K562 (cell line): ENCODE measurements at regions of chr15 and their contacts with region 1.

Region 1: GRCh38 chr15:64731012-64731806 is 44.2 kb downstream of the RBPMS2 start:
- DNase-seq: peak; percentile 70 to 86 (median 76)
- ATAC-seq: peak; percentile 91
- H3K4me3 ChIP-seq: no peak overlapping the region
- H3K27ac ChIP-seq: no peak overlapping the region
- H3K4me1 ChIP-seq: no peaks in the 10 kb centered on the region; a peak in 2 of 5 replicates
- H3K27me3 ChIP-seq: peaks cover 8 to 22% of the 10 kb centered on the region in 2 experiments; a peak in 2 of 5 replicates
- CTCF ChIP-seq: peak; percentile 93 to 96 (median 94)
- EP300 ChIP-seq: no peak
- POLR2A ChIP-seq: no peak
- RAD21 ChIP-seq: peak; percentile 92 to 97

Region 2: GRCh38 chr15:64162870-64163658 is 568.1 kb before region 1 on chr15 and contains the start of gene PPIB:
- CTCF ChIA-PET with region 1: no interaction called
- POLR2A ChIA-PET with region 1: no interaction called
- in situ Hi-C with region 1: no loop called
- intact Hi-C with region 1: loop called (anchors 1 kb)
- DNase-seq: peak; percentile 95 to 98 (median 96)
- ATAC-seq: peak; percentile 98
- H3K4me3 ChIP-seq: peak within 1 kb of the TSS; percentile 92
- H3K27ac ChIP-seq: peak within 1 kb of the TSS; percentile 93
- H3K4me1 ChIP-seq: peaks cover 16 to 27% of the 10 kb centered on the region in 2 experiments; a peak in 3 of 5 replicates
- H3K27me3 ChIP-seq: no peaks in the 10 kb centered on the region
- CTCF ChIP-seq: peak; percentile 82 to 88 (median 86)
- EP300 ChIP-seq: no peak
- POLR2A ChIP-seq: peak; percentile 98
- RAD21 ChIP-seq: peak; percentile 61 to 80
- polyA plus RNA-seq, gene PPIB: 652 to 746 TPM

Region 3: DNA sequence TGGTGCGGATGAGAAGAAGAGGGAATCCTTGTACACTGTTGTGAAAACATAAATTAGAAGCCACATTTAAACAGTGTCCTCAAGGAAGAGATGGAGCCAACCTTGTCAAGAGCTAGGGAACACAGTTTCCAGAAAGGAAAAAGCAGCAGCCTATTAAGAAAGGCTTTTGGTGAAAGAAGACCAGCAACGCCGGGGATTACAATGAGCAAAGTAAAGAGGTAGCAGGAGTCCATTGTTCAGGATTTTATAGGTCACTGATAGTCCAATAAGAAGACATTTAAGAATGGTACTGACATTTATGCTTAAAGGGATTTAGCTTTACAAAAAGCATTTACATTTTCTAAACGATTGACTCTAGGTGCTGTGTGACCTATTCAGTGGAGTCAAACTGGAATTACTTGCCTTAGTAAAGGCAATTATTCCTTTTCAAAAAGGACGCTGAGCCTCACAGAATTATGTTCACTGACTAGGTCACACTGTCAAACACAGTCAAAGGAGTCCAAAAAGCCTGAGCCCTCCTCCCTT is 416.0 kb before region 1 on chr15:
- CTCF ChIA-PET with region 1: no interaction called
- POLR2A ChIA-PET with region 1: no interaction called
- in situ Hi-C with region 1: no loop called
- intact Hi-C with region 1: no loop called
- DNase-seq: no peak
- ATAC-seq: no peak
- H3K4me3 ChIP-seq: no peak overlapping the region
- H3K27ac ChIP-seq: no peak overlapping the region
- H3K4me1 ChIP-seq: no peaks in the 10 kb centered on the region
- H3K27me3 ChIP-seq: no peaks in the 10 kb centered on the region
- CTCF ChIP-seq: no peak
- EP300 ChIP-seq: no peak
- POLR2A ChIP-seq: no peak
- RAD21 ChIP-seq: no peak

Region 4: DNA sequence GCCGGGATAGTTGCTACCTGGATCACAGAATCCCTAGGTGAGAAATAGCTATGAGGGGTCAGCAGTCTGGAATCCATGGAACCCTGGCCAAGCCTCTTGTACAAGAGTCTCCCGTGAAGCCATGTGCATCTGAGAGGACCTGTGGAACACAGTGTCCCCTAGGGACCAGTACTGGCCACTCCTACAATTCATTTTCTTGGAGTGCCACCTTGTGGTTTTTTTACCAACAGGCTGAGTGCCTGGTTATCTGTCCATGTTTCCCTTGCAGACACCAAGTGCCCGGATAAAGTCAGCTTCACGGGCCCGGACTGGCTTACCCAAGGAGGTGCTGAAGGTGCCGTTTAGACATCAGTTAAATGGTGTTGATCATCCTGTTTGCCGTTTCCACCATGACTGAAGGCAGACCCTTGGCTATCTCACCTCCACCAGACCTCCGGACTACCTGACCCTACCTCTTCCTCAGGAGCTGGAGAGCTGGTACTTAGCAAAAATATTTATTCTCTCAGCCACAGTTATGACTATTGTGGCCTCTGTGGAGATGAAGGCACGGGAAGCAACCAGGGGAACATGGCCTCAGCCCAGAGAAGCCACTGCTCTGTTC is 49.7 kb before region 1 on chr15:
- CTCF ChIA-PET with region 1: interaction called, 92 read pairs
- POLR2A ChIA-PET with region 1: interaction called, 13 read pairs
- in situ Hi-C with region 1: loop called (anchors 5 kb)
- intact Hi-C with region 1: loop called (anchors 1 kb)
- DNase-seq: peak; percentile 60 to 80 (median 70)
- ATAC-seq: peak; percentile 98
- H3K4me3 ChIP-seq: no peak overlapping the region
- H3K27ac ChIP-seq: no peak overlapping the region
- H3K4me1 ChIP-seq: no peaks in the 10 kb centered on the region; a peak in 1 of 5 replicates
- H3K27me3 ChIP-seq: no peaks in the 10 kb centered on the region
- CTCF ChIP-seq: peak; percentile 91 to 100 (median 99)
- EP300 ChIP-seq: 0 out of 2 replicates have a peak, but pooled peaks have one; percentile 5
- POLR2A ChIP-seq: no peak
- RAD21 ChIP-seq: peak; percentile 93 to 98

Region 5: DNA sequence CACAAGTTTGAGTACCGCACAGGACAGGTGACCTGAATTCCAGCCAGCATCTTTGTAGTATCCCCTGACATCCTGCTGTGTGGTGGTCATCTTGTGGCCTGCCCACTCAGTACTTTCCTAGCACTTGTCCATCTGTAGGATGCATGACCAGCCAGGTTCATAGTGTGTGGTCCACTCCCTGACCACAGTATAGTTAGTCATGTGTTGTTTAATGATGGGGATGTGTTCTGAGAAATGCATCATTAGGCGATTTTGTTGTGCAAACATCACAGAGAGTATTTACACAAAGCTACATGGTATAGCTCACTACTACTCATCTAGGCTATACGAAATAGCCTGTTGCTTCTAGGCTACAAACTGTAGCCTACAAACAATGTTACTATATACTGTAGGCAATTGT is 61.1 kb after region 1 on chr15:
- CTCF ChIA-PET with region 1: no interaction called
- POLR2A ChIA-PET with region 1: no interaction called
- in situ Hi-C with region 1: no loop called
- intact Hi-C with region 1: no loop called
- DNase-seq: no peak
- ATAC-seq: no peak
- H3K4me3 ChIP-seq: no peak overlapping the region
- H3K27ac ChIP-seq: no peak overlapping the region
- H3K4me1 ChIP-seq: no peaks in the 10 kb centered on the region; a peak in 1 of 5 replicates
- H3K27me3 ChIP-seq: peaks cover 0 to 10% of the 10 kb centered on the region in 2 experiments; a peak in 1 of 5 replicates
- CTCF ChIP-seq: no peak
- EP300 ChIP-seq: no peak
- POLR2A ChIP-seq: no peak
- RAD21 ChIP-seq: no peak

Region 6: DNA sequence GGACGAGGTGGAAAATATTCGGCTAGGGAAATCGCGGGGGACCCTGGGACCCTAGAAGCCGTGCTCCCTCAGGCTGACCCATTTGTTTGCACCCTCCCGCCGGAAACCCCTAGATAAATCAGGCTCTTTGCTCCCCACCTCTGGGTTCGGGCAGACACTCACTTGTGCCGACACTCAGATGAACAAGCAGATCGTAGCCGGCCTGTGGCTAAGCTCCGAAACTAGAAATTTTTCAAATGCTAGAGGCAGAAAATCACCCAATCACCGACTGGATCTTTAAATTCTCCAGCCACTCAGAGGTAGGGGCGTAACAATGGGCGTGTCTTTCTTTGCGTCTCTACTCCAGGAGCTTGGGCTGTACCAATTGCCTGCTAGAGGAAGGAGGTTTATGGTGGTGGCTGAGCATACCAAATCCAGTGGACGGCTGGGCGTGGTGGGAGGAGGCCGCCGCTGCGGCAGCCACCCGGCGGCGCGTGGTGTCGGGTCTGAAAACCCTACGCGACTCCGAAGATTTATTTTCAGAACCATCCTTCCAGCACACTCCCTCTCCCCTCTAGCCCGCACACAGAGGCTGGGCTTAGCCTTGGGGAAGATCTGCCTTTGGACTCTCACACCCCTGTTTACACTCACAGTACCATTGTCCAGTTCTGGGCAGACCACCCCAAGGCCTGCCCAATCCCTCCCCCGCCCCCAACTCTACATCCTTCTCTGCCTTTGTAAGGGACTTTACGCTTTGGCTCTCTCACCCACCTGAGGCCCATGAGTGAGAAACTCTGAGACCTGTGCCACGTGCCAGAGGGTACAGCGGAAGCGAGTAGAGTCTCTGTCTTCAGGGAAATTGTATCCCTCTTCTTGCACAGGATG is 94.5 kb after region 1 on chr15 and contains the start of gene PIF1:
- CTCF ChIA-PET with region 1: no interaction called
- POLR2A ChIA-PET with region 1: no interaction called
- in situ Hi-C with region 1: no loop called
- intact Hi-C with region 1: no loop called
- DNase-seq: peak; percentile 91 to 98 (median 94)
- ATAC-seq: peak; percentile 99
- H3K4me3 ChIP-seq: peak within 1 kb of the TSS; percentile 65
- H3K27ac ChIP-seq: peak within 1 kb of the TSS; percentile 88
- H3K4me1 ChIP-seq: peaks cover 8 to 19% of the 10 kb centered on the region in 2 experiments; a peak in 4 of 5 replicates
- H3K27me3 ChIP-seq: no peaks in the 10 kb centered on the region
- CTCF ChIP-seq: no peak
- EP300 ChIP-seq: no peak
- POLR2A ChIP-seq: peak; percentile 91
- RAD21 ChIP-seq: 0 out of 4 replicates have a peak, but pooled peaks of 1 of the 2 experiments have one; percentile 7
- polyA plus RNA-seq, gene PIF1: 1.1 to 1.5 TPM

Region 7: GRCh38 chr15:64905119-64905831 is 174.1 kb after region 1 on chr15:
- CTCF ChIA-PET with region 1: interaction called, 16 read pairs
- POLR2A ChIA-PET with region 1: no interaction called
- in situ Hi-C with region 1: loop called (anchors 5 kb)
- intact Hi-C with region 1: no loop called
- DNase-seq: peak; percentile 75 to 81 (median 76)
- ATAC-seq: peak; percentile 99
- H3K4me3 ChIP-seq: no peak overlapping the region
- H3K27ac ChIP-seq: no peak overlapping the region
- H3K4me1 ChIP-seq: peaks cover 0 to 5% of the 10 kb centered on the region in 2 experiments; a peak in 2 of 5 replicates
- H3K27me3 ChIP-seq: peaks cover 0 to 16% of the 10 kb centered on the region in 2 experiments; a peak in 2 of 5 replicates
- CTCF ChIP-seq: peak; percentile 76 to 89 (median 85)
- EP300 ChIP-seq: no peak
- POLR2A ChIP-seq: no peak
- RAD21 ChIP-seq: peak; percentile 58 to 85; a peak in 3 of 4 replicates

Region 8: GRCh38 chr15:65384895-65385858 is 654.0 kb after region 1 on chr15:
- CTCF ChIA-PET with region 1: interaction called, 10 read pairs
- POLR2A ChIA-PET with region 1: no interaction called
- in situ Hi-C with region 1: no loop called
- intact Hi-C with region 1: no loop called
- DNase-seq: peak; percentile 88 to 91 (median 90)
- ATAC-seq: peak; percentile 96
- H3K4me3 ChIP-seq: peak overlapping the region; percentile 20; the same call in 1 of the 2 replicates
- H3K27ac ChIP-seq: no peak overlapping the region
- H3K4me1 ChIP-seq: peaks cover 6 to 15% of the 10 kb centered on the region in 2 experiments; a peak in 4 of 5 replicates
- H3K27me3 ChIP-seq: peaks cover 48 to 66% of the 10 kb centered on the region in 2 experiments; a peak in 4 of 5 replicates
- CTCF ChIP-seq: peak; percentile 93 to 97 (median 96)
- EP300 ChIP-seq: no peak
- POLR2A ChIP-seq: no peak
- RAD21 ChIP-seq: peak; percentile 86 to 96